ENCODE measurements at regions of chr13 and their contacts with region 1.

Region 1: GRCh38 chr13:99269627-99270241 is 11.6 kb upstream of the GPR18 start:
- DNase-seq: peak; percentile 46
- ATAC-seq: peak; percentile 62
- H3K4me3 Mint-ChIP-seq: no peak overlapping the region
- H3K27ac Mint-ChIP-seq: no peak overlapping the region
- H3K4me1 Mint-ChIP-seq: peaks cover 64% of the 10 kb centered on the region
- H3K27me3 Mint-ChIP-seq: no peaks in the 10 kb centered on the region

Region 2: DNA sequence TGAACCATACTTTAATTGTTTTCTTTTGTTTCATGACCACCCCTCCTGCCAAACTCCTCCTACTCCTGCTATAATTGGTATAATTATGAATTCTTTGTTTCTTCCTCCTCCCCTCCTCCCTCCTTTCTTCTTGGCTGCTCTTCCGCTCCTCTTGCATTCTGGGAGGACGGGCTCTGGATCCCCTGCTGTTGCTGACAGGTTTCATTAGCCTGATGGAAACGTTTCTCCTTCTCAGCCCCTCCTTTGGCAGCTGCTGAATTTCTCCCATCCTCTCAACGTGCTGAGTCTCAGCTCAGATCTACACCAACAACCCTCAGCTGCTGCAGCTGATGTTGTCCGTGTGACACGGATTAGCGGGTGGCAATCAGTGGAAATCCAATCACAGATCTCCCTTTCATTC is 166.2 kb before region 1 on chr13:
- CTCF ChIA-PET with region 1: no interaction called
- POLR2A ChIA-PET with region 1: no interaction called
- DNase-seq: no peak
- ATAC-seq: no peak
- H3K4me3 Mint-ChIP-seq: no peak overlapping the region
- H3K27ac Mint-ChIP-seq: no peak overlapping the region
- H3K4me1 Mint-ChIP-seq: peaks cover 3% of the 10 kb centered on the region
- H3K27me3 Mint-ChIP-seq: peaks cover 8% of the 10 kb centered on the region

Region 3: DNA sequence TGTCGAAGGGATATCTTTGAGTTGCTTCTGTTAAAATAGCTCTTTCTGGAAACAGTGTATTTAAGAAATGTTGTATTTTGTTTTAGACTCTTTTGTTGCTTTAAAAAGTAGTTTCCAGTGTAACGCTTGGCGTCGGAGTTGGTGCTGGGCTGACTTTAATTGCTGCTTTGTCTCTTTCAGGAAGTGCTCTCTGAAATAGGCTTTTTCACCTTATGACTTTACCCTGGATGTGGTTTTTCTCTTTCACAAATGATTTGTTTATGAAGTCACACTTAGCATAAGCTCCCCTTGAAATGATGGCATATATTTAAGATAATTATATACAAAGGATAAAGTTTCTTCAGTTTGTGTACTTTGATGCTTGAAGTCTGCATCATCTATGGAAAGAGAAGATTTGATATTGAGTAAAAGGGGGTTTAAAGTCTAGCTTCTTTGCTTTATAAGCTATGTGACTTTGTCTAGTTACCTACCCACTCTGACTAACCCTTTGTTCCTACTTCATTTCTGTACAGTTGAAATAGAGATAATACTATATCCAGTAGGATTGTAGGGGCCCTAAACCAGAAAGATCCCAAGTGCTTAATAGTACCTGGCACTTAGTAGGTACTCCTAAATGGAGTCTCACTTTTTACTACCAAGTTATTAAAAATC is 11.4 kb before region 1 on chr13 and contains the start of gene GPR18:
- CTCF ChIA-PET with region 1: interaction called, 99 read pairs
- POLR2A ChIA-PET with region 1: interaction called, 3 read pairs
- DNase-seq: peak; percentile 65
- ATAC-seq: peak; percentile 76
- H3K4me3 Mint-ChIP-seq: peak within 1 kb of the TSS; percentile 83
- H3K27ac Mint-ChIP-seq: peak within 1 kb of the TSS; percentile 94
- H3K4me1 Mint-ChIP-seq: peaks cover 65% of the 10 kb centered on the region
- H3K27me3 Mint-ChIP-seq: no peaks in the 10 kb centered on the region
- total RNA-seq, gene GPR18: 16.2 to 16.6 TPM

Region 4: DNA sequence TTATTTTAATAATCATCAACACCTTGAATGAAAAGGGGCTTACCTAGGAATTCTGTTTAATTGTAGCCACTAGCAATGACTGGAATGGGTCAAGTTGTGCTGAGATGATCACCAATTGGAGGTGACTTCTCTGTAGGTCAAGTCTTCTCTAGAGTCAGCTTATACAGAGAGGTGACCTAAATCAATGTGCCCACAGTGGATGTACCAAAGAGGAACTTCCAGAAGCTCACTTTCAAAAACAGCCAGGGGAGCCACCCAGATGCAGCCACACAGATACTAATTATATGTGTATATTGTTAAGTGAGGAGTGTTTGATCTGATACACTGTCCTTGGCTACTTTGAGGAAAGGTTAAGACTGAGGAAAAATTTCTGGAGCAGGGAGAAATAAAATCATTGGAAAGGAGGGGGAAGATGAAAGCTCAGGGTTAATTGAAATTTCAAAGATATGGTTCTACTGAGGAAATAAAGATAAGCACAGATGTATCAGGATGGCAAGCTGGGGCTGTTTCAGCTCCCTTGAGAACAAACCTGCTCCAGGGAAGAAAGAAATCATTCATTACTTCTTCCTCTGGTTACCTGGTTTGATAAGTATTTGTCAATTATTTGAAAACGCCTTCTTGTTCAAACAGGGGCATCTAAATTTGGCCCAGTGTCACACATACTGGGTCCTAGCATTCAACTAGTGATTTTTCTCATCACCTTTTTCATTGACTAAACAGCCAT is 32.3 kb after region 1 on chr13:
- CTCF ChIA-PET with region 1: interaction called, 22 read pairs
- POLR2A ChIA-PET with region 1: interaction called, 3 read pairs
- DNase-seq: no peak
- ATAC-seq: no peak
- H3K4me3 Mint-ChIP-seq: no peak overlapping the region
- H3K27ac Mint-ChIP-seq: peak overlapping the region; percentile 12
- H3K4me1 Mint-ChIP-seq: peaks cover 79% of the 10 kb centered on the region
- H3K27me3 Mint-ChIP-seq: no peaks in the 10 kb centered on the region

Region 5: DNA sequence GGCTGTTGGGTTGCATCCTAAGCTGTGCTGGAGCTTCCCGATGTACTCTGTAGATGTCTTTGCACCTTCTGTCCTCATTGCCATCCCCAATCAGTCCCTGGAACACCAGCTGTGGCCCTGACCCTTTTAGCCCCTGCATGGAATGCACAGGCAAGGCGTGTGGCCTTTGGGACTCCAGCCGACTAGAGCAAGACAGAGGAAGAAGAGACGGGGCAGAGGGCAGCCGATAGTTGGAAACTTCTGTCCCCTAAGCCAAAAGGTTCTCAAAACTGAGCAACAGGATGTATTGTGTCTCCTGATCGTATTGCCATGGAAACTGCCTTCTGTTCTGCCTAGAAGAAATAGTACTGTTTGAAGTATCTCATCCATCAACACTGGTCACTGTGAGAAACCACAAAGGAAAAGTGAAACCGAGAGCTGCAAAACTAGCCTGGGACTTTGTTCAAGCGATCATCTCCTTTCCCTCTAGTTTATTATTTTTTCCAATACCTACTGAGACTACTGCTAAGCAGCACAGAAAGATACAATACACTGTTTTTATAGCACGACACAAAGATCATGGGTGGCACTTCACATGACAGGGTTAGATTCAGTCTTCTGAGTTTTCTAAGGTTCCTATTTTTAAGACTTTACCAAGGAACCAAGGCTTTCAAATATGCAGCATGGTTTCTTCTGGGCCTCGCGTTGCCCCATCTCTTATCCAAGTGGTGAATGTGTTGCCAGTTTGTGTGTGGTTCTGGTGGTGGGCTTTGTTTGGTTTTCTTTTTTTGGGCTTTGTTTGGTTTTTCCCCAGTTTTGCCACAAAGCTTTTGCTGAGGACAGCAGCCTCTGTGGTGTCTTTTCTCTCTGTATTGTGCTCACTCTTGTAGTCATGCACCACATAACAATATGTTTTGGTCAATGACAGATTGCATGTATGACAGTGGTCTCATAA is 86.7 kb after region 1 on chr13:
- CTCF ChIA-PET with region 1: interaction called, 73 read pairs
- POLR2A ChIA-PET with region 1: interaction called, 5 read pairs
- DNase-seq: peak; percentile 86
- ATAC-seq: peak; percentile 81
- H3K4me3 Mint-ChIP-seq: peak overlapping the region; percentile 39
- H3K27ac Mint-ChIP-seq: peak overlapping the region; percentile 89
- H3K4me1 Mint-ChIP-seq: peaks cover 96% of the 10 kb centered on the region
- H3K27me3 Mint-ChIP-seq: no peaks in the 10 kb centered on the region

Region 6: DNA sequence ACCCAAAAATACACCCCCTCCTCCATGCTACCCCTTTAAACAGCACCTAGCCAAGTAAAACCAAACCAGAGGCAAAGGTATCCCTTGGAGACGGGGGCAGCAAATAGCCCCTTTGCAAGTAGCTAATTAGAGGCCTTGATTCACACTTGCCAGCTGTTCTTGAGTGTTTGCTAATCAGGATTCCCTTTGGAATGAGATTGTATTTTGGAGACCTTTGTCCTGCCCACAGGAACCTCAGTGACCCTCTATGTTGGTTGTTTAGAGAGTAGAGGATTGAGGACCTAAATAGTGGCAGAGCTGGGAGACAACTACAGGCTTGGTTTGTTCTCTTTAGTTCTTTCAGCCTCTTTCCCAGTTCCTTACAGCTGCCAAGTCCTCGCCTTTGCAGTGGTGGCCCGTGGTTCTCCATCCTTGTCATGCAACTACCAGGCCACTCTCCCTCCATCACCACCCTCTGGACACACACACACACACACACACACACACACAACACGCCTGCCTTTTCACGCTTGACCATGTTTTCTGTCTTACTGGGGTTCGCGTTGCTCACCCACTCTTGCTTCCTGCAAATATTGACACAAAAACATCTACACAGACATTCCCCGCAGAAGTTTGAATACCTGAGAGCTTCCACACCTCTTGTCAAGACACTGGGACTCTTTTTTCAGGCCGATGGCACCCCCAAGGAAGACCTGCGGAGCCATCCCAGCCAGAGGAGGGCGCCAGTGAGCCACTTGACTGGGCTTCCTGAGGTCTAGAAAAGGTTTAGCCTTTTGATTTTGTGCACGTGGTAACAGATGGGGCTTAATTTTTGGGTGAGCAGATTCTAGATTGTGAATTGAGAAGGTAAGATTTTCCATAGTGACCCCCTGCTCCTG is 117.4 kb after region 1 on chr13:
- CTCF ChIA-PET with region 1: interaction called, 139 read pairs
- POLR2A ChIA-PET with region 1: no interaction called
- DNase-seq: peak; percentile 88
- ATAC-seq: peak; percentile 26
- H3K4me3 Mint-ChIP-seq: no peak overlapping the region
- H3K27ac Mint-ChIP-seq: peak overlapping the region; percentile 58
- H3K4me1 Mint-ChIP-seq: peaks cover 64% of the 10 kb centered on the region
- H3K27me3 Mint-ChIP-seq: no peaks in the 10 kb centered on the region

Region 7: DNA sequence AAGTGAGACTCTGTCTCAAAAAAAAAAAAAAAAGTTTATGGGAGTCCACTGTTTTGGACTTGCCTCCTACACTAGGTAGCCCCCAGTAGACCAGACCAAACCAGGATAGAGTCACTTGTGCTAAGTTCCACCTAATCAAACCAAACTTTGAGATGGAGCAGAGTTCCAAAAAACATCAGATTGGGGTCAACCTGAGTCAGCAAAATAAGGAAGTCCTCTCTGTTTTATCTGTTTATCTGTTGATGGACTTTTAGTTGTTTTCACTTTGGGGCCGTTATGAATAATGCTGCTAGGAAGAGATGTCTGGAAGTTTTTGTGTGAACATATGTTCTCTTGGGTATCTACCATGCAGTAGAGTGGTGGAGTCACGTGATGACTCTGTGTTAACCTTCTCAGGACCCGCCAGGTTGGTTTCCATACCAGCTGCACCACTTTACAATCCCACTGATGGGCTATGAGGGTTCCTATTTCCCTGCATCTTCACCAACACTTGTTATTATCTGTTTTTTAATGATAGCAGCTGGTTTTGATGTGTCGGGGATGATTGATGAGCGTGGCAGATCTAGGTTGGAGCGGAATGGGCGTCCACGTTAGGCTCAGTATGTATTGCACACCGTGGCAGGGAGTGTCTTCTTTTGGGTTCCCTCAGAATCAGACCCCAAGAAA is 184.9 kb after region 1 on chr13:
- CTCF ChIA-PET with region 1: no interaction called
- POLR2A ChIA-PET with region 1: no interaction called
- DNase-seq: no peak
- ATAC-seq: no peak
- H3K4me3 Mint-ChIP-seq: no peak overlapping the region
- H3K27ac Mint-ChIP-seq: no peak overlapping the region
- H3K4me1 Mint-ChIP-seq: peaks cover 4% of the 10 kb centered on the region
- H3K27me3 Mint-ChIP-seq: peaks cover 10% of the 10 kb centered on the region

Region 8: GRCh38 chr13:99501184-99501847 is 231.6 kb after region 1 on chr13 and contains the start of gene TM9SF2:
- CTCF ChIA-PET with region 1: interaction called, 10 read pairs
- POLR2A ChIA-PET with region 1: no interaction called
- DNase-seq: peak; percentile 98
- ATAC-seq: peak; percentile 70
- H3K4me3 Mint-ChIP-seq: peak within 1 kb of the TSS; percentile 88
- H3K27ac Mint-ChIP-seq: peak within 1 kb of the TSS; percentile 97
- H3K4me1 Mint-ChIP-seq: peaks cover 76% of the 10 kb centered on the region
- H3K27me3 Mint-ChIP-seq: no peaks in the 10 kb centered on the region
- total RNA-seq, gene TM9SF2: 64.4 to 64.5 TPM